ENCODE measurements at regions of chr3 and their contacts with region 1.

Region 1: DNA sequence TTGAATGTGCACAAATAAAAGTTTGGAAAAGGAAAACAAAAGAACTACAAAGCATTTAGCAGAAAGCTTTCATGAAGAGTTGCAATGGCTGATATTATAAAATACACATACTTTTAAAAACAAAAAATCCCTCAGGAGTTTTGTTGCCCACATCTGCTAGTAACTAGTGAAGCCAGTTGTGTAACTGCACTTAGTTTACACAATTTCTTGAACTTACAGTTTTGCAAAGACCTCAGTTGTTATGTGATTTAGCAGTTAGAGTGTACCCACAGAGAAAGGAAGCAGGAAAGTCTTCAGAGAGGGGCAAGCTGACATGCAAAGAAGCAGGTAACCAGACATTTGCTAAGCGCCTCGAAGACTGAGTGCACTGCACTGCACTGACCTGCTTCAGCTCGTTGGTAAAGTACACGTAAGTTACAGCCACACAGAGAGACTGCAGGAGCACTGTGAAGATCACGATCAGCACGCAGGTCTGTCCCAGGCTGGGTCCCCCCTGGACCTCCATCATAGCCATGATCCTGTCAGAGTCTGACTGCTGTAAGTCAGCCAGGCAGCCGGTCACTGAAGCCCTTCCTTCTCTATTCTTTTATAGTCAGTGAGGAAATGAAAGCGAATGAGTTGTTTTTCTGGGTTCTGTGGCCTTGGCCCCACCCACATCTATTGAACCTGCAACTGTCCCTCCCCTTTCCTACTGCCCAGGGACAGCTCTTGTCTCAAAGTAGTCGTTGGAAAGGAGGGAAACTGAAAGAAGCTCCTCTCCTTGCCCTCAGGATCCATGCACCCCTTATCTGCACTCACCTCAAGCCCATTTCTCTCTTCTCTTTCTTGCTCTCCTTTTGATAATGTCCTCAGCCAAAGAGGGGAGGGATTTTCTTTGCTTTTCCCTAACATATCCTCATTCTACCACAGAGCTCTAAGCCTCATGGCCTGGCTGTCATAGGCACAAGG is at the start of gene TNFSF10:
- DNase-seq: peak; percentile 73
- ATAC-seq: peak; percentile 96
- H3K4me3 ChIP-seq: peak within 1 kb of the TSS; percentile 60 to 96 (median 81)
- H3K4me3 Mint-ChIP-seq: peak within 1 kb of the TSS; percentile 98
- H3K27ac ChIP-seq: peak within 1 kb of the TSS; percentile 67 to 84
- H3K27ac Mint-ChIP-seq: peak within 1 kb of the TSS; percentile 96
- H3K4me1 ChIP-seq: peaks cover 27 to 30% of the 10 kb centered on the region in 2 donors
- H3K4me1 Mint-ChIP-seq: peaks cover 51% of the 10 kb centered on the region
- H3K27me3 ChIP-seq: no peaks in the 10 kb centered on the region
- H3K27me3 Mint-ChIP-seq: no peaks in the 10 kb centered on the region
- CTCF ChIP-seq: no peak
- total RNA-seq, gene TNFSF10: 16.4 and 17.8 TPM in 2 replicates

Region 2: DNA sequence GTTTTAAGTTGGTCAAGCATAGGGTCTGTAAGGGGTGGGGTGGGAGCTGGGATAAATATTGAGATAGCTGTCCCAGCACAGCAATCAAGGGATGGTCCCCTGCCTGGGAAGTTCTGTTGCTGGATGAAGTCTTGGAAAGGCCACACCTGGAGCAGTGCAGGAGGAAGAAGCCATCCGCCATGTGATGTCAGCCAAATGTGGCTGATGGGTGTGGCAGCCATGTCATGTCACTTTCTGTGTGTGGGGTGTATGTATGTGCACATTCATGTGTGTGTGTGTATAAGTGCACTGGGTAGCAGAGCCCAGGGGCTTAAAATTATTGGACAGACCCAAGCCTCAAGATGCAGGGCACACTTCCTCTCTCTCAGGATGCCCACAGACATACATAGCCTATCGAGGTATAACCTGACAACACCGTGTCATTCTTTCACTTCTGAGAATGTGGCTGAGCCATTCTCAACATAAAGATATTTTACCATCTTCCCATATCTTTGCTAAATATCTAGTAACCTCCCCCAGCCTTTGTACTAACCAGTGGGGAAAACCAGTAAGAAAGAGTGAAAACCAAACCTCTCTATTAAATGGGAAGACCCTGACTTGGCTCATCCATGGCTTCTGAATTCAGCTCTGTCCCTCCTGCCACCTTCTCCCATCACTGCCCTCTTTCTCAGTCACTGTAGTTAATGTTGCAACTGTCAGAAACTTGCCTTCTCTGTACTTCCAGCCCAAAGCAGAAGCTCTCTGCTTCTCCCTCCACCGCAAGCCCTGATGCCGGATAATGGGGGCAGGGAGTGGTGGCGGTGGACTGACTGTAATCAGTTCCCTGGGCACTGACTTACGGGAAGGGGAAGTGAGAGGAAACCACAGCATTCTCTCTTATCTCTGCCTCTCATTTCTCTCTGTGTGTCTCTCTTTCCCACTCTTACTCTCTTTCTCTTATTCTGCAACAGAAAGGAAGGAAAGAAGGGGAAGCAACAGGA is 11.1 kb before region 1 on chr3:
- CTCF ChIA-PET with region 1: interaction called, 11 read pairs
- POLR2A ChIA-PET with region 1: no interaction called
- intact Hi-C with region 1: no loop called
- DNase-seq: peak; percentile 56
- ATAC-seq: peak; percentile 78
- H3K4me3 ChIP-seq: peak overlapping the region in 1 of 5 experiments; percentile 16
- H3K4me3 Mint-ChIP-seq: peak overlapping the region; percentile 67
- H3K27ac ChIP-seq: peak overlapping the region; percentile 18 to 56
- H3K27ac Mint-ChIP-seq: peak overlapping the region; percentile 85
- H3K4me1 ChIP-seq: peaks cover 24 to 32% of the 10 kb centered on the region in 2 donors
- H3K4me1 Mint-ChIP-seq: peaks cover 56% of the 10 kb centered on the region
- H3K27me3 ChIP-seq: no peaks in the 10 kb centered on the region
- H3K27me3 Mint-ChIP-seq: no peaks in the 10 kb centered on the region
- CTCF ChIP-seq: no peak

Region 3: GRCh38 chr3:172546628-172547214 is 23.6 kb after region 1 on chr3:
- CTCF ChIA-PET with region 1: no interaction called
- POLR2A ChIA-PET with region 1: interaction called, 4 read pairs
- intact Hi-C with region 1: loop called (anchors 1 kb)
- DNase-seq: peak; percentile 45
- ATAC-seq: no peak
- H3K4me3 ChIP-seq: peak overlapping the region in 1 of 5 experiments; percentile 2
- H3K4me3 Mint-ChIP-seq: peak overlapping the region; percentile 64
- H3K27ac ChIP-seq: peak overlapping the region; percentile 29 to 60
- H3K27ac Mint-ChIP-seq: peak overlapping the region; percentile 77
- H3K4me1 ChIP-seq: peaks cover 15 to 18% of the 10 kb centered on the region in 2 donors
- H3K4me1 Mint-ChIP-seq: peaks cover 24% of the 10 kb centered on the region
- H3K27me3 ChIP-seq: no peaks in the 10 kb centered on the region
- H3K27me3 Mint-ChIP-seq: no peaks in the 10 kb centered on the region
- CTCF ChIP-seq: no peak

Region 4: DNA sequence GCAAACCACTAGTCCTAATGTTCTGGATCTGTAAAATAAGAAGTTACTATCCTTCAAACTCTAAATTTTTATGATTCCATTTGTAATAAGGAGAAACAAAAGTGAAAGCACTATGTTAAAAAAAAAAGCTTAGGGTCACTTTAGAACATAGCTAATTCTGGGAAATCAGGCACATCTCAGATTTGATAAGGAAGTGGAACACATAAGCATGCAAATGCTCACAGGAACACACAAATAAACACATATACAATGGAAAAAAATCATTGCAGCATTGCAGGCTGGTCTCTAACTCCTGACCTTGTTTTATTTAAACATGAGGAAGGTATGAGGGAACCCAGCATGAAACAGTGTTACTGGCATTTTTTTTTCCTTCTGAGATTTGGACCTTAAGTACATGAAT is 63.3 kb after region 1 on chr3:
- CTCF ChIA-PET with region 1: no interaction called
- POLR2A ChIA-PET with region 1: no interaction called
- intact Hi-C with region 1: no loop called
- DNase-seq: no peak
- ATAC-seq: no peak
- H3K4me3 ChIP-seq: no peak overlapping the region
- H3K4me3 Mint-ChIP-seq: no peak overlapping the region
- H3K27ac ChIP-seq: no peak overlapping the region
- H3K27ac Mint-ChIP-seq: no peak overlapping the region
- H3K4me1 ChIP-seq: peaks cover 6% of the 10 kb centered on the region in 2 donors
- H3K4me1 Mint-ChIP-seq: peaks cover 3% of the 10 kb centered on the region
- H3K27me3 ChIP-seq: no peaks in the 10 kb centered on the region
- H3K27me3 Mint-ChIP-seq: no peaks in the 10 kb centered on the region
- CTCF ChIP-seq: no peak

Measured in B cell (primary cell).